Aorta (tissue), 5 donors: ENCODE measurements at regions of chr2 and their contacts with region 1.

Region 1: GRCh38 chr2:152497481-152498052 is 162.6 kb downstream of the FMNL2 start:
- DNase-seq: no peak
- ATAC-seq: no peak
- H3K4me3 ChIP-seq: no peak overlapping the region
- H3K27ac ChIP-seq: no peak overlapping the region
- H3K4me1 ChIP-seq: peaks cover 4 to 12% of the 10 kb centered on the region in 2 donors
- H3K27me3 ChIP-seq: no peaks in the 10 kb centered on the region

Region 2: GRCh38 chr2:152421521-152422370 is 75.8 kb before region 1 on chr2:
- intact Hi-C with region 1: loop called in 1 of 2 experiments (anchors 10 kb)
- DNase-seq: peak in 1 of 2 donors; percentile 41
- ATAC-seq: peak; percentile 84
- H3K4me3 ChIP-seq: no peak overlapping the region
- H3K27ac ChIP-seq: no peak overlapping the region
- H3K4me1 ChIP-seq: peaks cover 2 to 9% of the 10 kb centered on the region in 2 donors
- H3K27me3 ChIP-seq: no peaks in the 10 kb centered on the region

Region 3: DNA sequence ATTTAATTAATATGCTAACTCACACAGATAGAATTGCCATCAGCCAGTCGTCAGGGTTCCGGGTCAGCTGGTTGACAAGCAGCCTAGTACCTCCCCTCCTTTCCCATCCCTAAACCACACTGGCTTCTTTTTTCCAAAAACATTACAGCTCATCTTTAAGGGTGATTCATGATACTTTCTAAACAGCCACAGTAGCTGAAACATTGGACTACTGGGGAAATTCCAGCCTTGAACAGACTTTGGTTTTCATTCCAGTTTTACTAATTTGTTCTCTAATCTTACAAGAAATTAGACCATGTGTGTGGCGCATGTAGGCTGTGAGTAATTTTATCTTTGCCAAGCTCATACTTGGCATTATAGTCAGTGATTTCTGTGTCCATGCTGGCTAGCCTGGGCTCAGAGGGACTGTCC is 51.8 kb before region 1 on chr2:
- intact Hi-C with region 1: loop called in 1 of 2 experiments (anchors 2 kb)
- DNase-seq: no peak
- ATAC-seq: peak; percentile 40
- H3K4me3 ChIP-seq: no peak overlapping the region
- H3K27ac ChIP-seq: peak overlapping the region in 1 of 2 donors; percentile 36
- H3K4me1 ChIP-seq: peaks cover 0 to 4% of the 10 kb centered on the region in 2 donors
- H3K27me3 ChIP-seq: no peaks in the 10 kb centered on the region

Region 4: DNA sequence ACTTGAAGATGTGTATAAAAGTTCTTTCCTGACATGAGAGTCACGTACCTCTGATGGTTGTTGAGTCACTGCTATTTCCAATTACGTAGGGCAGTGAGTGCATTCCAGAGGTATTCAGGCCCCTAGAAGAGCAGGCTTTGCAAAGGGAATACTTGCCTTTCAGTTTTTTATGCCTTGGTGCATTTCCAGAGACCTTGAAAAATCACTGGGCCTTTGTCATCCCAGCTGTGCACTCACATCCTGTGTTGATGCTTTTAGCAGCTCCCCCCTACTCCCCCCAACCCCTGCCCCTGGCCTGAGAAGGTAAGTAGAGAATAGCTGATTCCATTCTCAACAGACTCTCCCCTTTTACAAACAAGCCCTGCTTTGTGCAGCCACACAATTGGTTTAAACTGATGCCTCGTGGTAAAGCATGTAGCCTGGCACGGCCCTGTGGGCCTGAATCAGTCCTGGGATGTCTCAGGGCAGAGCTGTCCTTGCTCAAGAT is 45.5 kb after region 1 on chr2:
- intact Hi-C with region 1: loop called in 1 of 2 experiments (anchors 5 kb)
- DNase-seq: no peak
- ATAC-seq: peak; percentile 72
- H3K4me3 ChIP-seq: no peak overlapping the region
- H3K27ac ChIP-seq: peak overlapping the region; percentile 80 to 98
- H3K4me1 ChIP-seq: peaks cover 2 to 14% of the 10 kb centered on the region in 2 donors
- H3K27me3 ChIP-seq: no peaks in the 10 kb centered on the region

Region 5: DNA sequence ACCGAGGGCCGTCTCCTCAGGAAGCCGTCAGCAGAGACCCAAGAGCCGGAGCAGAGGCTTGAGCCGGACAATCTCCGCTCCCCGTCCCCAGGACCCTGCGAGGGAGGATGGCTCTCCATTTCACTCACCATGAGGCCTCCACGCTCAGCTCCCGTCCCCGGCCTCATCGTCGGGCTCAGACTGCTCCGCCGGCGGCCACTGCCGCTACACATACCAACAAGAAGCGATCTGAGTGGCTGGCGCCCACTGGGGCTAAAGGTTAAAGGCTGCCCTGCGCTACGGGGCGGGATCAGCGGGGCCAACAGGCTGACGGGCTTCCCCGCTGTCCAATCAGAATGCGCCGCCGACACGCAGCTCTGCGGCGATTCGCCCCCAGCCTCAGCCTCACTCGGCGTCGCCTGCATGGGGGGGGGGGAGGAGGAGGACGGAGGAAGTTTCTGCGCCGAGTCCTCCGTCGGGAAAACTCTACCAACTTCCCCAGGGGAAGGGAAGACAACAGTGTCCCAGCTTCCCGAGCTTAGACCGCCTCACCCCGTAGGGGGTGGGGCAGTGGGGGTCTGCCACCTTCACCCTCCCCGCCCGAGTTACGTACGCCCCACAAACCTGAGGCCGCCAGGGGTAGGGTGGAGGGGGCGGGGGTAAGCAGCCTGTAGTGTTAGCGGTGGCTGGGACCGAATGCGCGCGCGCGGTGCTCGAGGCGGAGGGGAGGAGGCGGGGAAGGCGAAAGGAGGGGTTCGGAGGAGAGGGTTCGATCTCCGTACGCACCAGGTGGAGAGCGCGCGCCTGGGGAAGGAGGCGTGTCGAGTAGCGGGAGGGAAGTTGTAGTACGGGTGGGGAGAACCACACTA is 219.9 kb after region 1 on chr2 and contains the start of gene PRPF40A:
- intact Hi-C with region 1: no loop called
- DNase-seq: peak; percentile 99 to 100
- ATAC-seq: peak; percentile 97
- H3K4me3 ChIP-seq: peak within 1 kb of the TSS; percentile 77 to 91
- H3K27ac ChIP-seq: peak within 1 kb of the TSS; percentile 62 to 87
- H3K4me1 ChIP-seq: peaks cover 0 to 6% of the 10 kb centered on the region in 2 donors
- H3K27me3 ChIP-seq: no peaks in the 10 kb centered on the region
- total RNA-seq, gene PRPF40A: 59.4 to 73.3 TPM